ENCODE measurements at regions of chr1 and their contacts with region 1.

Region 1: DNA sequence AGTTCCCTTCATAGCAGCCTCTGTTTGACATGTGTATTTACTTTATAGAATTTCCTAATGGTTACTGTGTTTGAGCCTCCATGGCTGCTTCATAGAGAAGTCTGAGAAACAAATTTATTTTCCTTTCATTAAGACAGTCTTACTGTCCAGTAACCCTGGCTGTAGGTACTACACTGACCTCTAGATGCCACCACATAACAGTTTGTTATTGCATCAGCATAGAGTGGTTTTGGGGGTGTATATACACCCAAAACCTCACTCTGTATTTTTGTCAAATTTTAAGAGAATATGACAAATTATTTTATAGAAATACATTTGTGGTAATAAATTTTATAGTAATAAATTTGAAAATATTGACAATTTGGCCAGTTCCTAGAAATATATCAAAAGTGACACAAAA is 57.3 kb downstream of the OBSCN start:
- DNase-seq: peak; percentile 33
- ATAC-seq: peak; percentile 88
- H3K4me3 ChIP-seq: no peak overlapping the region
- H3K27ac ChIP-seq: no peak overlapping the region
- H3K4me1 ChIP-seq: peaks cover 5% of the 10 kb centered on the region
- H3K27me3 ChIP-seq: no peaks in the 10 kb centered on the region
- CTCF ChIP-seq: peak; percentile 30; the same call in 1 of the 2 replicates
- POLR2A ChIP-seq: no peak
- RAD21 ChIP-seq: peak; percentile 36

Region 2: DNA sequence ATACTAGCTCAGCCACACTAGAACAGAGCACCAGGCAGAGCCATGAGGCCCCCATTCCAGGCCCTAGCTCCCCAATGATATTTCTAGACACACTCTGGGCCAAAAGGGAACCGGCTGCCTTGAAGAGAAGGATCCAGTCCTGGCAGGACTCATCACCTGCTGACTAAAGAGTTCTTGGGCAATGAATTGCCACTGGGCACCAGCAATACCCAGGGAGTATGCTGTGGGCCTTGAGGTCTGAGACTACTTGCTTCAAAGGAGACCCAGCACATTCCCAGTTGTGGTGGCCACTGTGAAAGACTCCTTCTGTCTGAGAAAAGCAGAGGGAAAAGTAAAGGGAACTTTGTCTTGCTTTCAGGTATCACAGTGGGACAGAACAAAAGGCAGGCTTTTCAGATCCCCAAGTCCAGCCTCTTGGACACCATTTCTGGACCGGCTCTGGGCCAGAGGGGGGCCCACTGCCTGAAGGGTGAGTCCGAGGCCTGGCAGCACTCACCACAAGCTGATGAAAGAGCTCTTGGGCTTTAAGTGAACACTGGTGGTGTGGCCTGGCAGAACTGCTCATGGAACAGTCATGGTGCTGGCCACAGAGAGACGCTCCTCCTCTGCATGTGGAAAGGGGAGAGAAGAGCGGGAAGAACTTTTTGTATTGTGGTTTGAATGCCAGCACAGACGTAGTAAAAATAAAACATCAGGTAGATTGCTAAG is 1019.4 kb before region 1 on chr1:
- CTCF ChIA-PET with region 1: no interaction called
- POLR2A ChIA-PET with region 1: no interaction called
- dilution Hi-C with region 1: no loop called
- in situ Hi-C with region 1: no loop called
- intact Hi-C with region 1: no loop called
- DNase-seq: no peak
- ATAC-seq: no peak
- H3K4me3 ChIP-seq: no peak overlapping the region
- H3K27ac ChIP-seq: no peak overlapping the region
- H3K4me1 ChIP-seq: no peaks in the 10 kb centered on the region; the same call in 1 of the 2 replicates
- H3K27me3 ChIP-seq: no peaks in the 10 kb centered on the region
- CTCF ChIP-seq: no peak
- POLR2A ChIP-seq: no peak
- RAD21 ChIP-seq: no peak

Region 3: DNA sequence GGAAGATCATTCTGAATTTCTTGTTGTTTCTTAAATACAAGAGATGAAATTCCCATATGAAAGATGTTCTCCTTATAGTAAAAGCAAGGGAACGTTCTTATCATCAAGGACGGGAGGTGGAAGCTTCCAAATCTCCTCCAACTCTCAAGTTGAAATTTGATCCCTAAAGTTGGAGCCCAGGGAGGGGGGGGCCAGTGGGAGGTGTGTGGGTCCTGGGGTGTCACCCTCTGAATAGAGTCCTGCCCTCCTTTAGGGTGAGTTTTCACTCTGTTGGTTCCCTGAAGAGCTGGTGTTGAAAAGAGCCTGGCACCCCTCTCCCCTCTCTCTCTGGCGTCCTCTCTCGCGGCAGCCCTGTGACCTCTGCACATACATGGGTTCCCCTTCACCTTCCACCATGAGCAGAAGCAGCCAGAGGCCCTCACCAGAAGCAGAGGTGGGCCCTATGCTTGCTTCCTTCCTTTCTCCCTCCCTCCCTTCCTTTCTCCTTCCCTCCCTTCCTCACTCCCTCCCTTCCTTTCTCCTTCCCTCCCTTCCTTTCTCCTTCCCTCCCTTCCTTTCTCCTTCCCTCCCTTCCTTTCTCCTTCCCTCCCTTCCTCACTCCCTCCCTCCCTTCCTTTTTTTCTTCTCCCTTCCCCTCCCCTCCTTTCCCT is 161.5 kb after region 1 on chr1:
- CTCF ChIA-PET with region 1: no interaction called
- POLR2A ChIA-PET with region 1: interaction called, 13 read pairs
- dilution Hi-C with region 1: no loop called
- in situ Hi-C with region 1: no loop called
- intact Hi-C with region 1: no loop called
- DNase-seq: no peak
- ATAC-seq: no peak
- H3K4me3 ChIP-seq: no peak overlapping the region
- H3K27ac ChIP-seq: no peak overlapping the region
- H3K4me1 ChIP-seq: no peaks in the 10 kb centered on the region
- H3K27me3 ChIP-seq: no peaks in the 10 kb centered on the region
- CTCF ChIP-seq: no peak
- POLR2A ChIP-seq: no peak
- RAD21 ChIP-seq: no peak